OCI-LY7 (cell line): ENCODE measurements at regions of chr14 and their contacts with region 1.

Region 1: GRCh38 chr14:22472935-22473854 is 115.8 kb downstream of the DAD1 start:
- DNase-seq: peak; percentile 89
- H3K4me3 ChIP-seq: peak overlapping the region; percentile 37
- H3K27ac ChIP-seq: peak overlapping the region; percentile 81
- H3K4me1 ChIP-seq: peaks cover 98% of the 10 kb centered on the region
- CTCF ChIP-seq: peak; percentile 96

Region 2: DNA sequence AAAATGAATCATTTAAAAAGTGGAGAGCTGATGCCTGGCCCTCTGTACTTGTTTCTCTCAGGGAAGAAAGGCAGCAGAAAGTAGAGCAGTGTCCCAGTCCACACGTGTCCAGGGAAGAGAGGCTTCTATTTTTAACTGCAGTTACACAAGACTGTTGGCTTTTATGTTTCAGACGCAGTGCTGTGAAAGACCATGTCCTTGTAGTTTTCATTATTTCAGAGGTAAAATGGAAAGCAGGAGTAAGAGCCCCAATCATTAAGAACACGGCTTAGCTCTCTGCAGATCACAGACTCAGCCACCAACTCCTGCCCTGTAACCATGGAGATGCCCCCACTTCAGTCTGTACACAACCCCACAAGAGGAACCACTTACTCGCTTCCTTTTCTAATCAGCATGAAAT is 220.5 kb before region 1 on chr14:
- CTCF ChIA-PET with region 1: no interaction called
- POLR2A ChIA-PET with region 1: no interaction called
- intact Hi-C with region 1: no loop called
- DNase-seq: no peak
- H3K4me3 ChIP-seq: no peak overlapping the region
- H3K27ac ChIP-seq: no peak overlapping the region
- H3K4me1 ChIP-seq: no peaks in the 10 kb centered on the region
- CTCF ChIP-seq: no peak

Region 3: DNA sequence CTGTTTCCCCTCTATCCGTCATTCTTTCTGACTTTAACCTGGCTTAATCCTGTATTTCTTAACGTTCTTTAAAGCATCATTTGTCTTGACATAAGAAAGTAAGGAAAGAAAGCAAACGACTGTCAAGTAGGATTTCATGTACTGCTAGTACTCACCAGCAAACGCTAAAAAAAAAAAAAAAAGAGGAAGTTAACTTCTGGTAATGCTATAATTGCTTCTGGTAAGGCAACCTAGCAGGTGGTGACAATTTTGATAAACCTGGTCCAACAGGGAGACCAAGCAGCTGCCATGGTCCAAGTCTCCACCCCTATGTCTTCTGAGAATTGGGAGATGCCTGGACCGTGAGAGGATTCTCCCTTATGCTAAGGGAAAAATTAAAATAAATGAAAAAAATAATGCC is 190.8 kb before region 1 on chr14:
- CTCF ChIA-PET with region 1: no interaction called
- POLR2A ChIA-PET with region 1: interaction called, 5 read pairs
- intact Hi-C with region 1: loop called (anchors 10 kb)
- DNase-seq: peak; percentile 86
- H3K4me3 ChIP-seq: peak overlapping the region; percentile 55
- H3K27ac ChIP-seq: peak overlapping the region; percentile 71
- H3K4me1 ChIP-seq: peaks cover 36% of the 10 kb centered on the region
- CTCF ChIP-seq: no peak

Region 4: DNA sequence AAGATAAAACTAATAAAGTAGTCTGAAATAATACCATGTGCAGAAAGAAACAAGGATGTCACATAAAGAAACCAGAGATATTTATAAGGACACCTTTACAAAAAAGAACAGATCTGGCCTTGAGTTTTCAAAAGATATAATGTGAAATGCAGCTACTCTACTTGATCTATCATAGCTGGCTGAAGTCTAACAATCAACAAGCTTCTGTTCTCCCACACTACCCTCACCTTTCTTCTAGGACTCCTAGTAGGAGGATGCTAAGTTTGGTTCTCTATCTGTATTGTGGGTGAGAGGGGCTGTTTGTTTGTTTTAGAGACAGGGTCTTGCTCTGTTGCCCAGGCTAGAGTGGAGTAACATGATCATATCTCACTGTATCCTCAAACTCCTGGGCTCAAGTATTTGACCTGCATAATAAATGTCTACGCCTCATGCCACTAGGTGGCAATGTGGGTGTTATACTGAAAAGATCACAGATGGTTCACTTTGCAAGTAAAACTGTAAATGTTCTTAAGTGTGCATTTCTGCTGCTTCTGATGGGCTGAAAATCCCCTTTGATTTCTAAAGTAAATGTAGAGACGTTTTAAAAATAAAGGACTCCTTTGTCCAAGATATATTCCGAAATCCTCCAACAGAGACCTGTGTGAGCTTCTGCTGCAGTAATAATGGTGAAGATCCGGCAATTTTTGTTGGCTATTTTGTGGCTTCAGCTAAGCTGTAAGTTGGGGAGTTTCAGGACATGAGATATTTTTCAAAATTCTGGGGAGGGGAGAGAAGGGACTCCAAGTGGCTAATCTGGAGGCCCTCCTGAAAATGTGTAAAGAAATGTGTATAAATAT is 153.5 kb before region 1 on chr14:
- CTCF ChIA-PET with region 1: interaction called, 3 read pairs
- POLR2A ChIA-PET with region 1: no interaction called
- intact Hi-C with region 1: loop called (anchors 1 kb)
- DNase-seq: peak; percentile 77
- H3K4me3 ChIP-seq: no peak overlapping the region
- H3K27ac ChIP-seq: no peak overlapping the region
- H3K4me1 ChIP-seq: peaks cover under 1% of the 10 kb centered on the region
- CTCF ChIP-seq: peak; percentile 94

Region 5: DNA sequence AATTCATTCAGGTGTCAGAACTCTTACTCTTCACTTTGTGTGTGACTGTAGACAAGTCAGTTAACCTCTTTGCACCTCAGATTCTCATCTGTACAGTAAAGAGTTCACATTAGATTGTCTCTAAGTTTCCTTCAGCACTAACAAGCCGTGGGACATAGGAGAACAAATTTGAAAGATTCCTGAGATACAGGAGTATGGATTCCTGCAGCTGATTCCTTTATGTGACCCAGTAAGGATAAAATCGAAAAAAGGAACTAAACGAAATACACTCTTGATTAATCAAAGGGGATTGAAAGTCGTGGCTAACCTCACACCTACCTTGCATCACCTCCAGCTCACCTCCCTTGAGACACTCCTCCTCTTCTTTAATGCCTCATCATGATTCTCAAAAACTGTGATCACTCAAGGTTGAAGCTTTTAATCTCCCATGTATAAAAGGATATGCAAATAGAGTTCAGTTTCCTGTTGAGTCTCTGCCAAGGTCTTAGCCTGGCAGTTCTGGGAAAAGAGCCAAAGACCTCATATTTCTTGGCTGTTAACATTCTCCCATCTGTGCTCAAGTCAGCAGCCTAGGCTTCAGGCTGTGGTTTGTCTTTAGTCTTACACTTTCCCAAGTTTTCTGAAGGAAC is 40.7 kb before region 1 on chr14:
- CTCF ChIA-PET with region 1: interaction called, 16 read pairs
- POLR2A ChIA-PET with region 1: interaction called, 26 read pairs
- intact Hi-C with region 1: loop called (anchors 1 kb)
- DNase-seq: peak; percentile 94
- H3K4me3 ChIP-seq: peak overlapping the region; percentile 61
- H3K27ac ChIP-seq: peak overlapping the region; percentile 97
- H3K4me1 ChIP-seq: peaks cover 88% of the 10 kb centered on the region
- CTCF ChIP-seq: no peak

Region 6: DNA sequence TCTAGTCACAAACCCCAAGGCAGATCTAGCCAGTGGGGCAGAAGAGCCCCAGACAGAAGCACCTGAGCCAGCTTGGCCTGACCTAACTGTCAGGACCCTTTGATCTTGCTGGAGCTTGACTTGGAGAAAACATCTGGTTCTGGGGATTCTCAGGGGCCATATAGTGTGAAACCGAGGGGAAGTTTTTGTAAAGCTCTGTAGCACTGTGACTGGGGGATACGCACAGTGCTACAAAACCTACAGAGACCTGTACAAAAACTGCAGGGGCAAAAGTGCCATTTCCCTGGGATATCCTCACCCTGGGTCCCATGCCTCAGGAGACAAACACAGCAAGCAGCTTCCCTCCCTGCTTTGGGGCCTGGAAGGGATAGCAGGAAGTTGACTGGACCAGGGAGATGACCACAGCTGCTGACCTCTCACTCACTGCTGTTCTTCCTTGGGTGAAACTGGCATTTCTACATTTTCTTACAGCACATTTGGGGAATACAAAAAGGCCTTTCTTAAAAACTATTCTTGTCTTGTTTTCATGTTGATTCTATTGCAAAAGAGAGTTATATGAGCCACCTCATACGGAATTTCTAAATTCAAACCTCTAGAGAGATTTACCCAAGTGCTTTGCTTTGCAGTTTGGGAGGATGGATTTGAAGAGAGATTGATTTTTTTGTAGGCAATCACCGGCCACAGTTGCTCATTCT is 24.1 kb before region 1 on chr14:
- CTCF ChIA-PET with region 1: interaction called, 10 read pairs
- POLR2A ChIA-PET with region 1: interaction called, 12 read pairs
- intact Hi-C with region 1: loop called (anchors 1 kb)
- DNase-seq: peak; percentile 73
- H3K4me3 ChIP-seq: peak overlapping the region; percentile 1
- H3K27ac ChIP-seq: peak overlapping the region; percentile 81
- H3K4me1 ChIP-seq: peaks cover 48% of the 10 kb centered on the region
- CTCF ChIP-seq: no peak

Region 7: GRCh38 chr14:22653012-22653621 is 179.9 kb after region 1 on chr14:
- CTCF ChIA-PET with region 1: no interaction called
- POLR2A ChIA-PET with region 1: no interaction called
- intact Hi-C with region 1: loop called (anchors 10 kb)
- DNase-seq: peak; percentile 72
- H3K4me3 ChIP-seq: no peak overlapping the region
- H3K27ac ChIP-seq: no peak overlapping the region
- H3K4me1 ChIP-seq: no peaks in the 10 kb centered on the region
- CTCF ChIP-seq: peak; percentile 84